ENCODE measurements at regions of chr11 and their contacts with region 1.

Region 1: GRCh38 chr11:80899381-80899780 is 1458.6 kb upstream of the TENM4 start:
- DNase-seq: no peak
- ATAC-seq: peak; percentile 24 to 75 (median 62)
- H3K4me3 ChIP-seq: no peak overlapping the region
- H3K27ac ChIP-seq: no peak overlapping the region
- H3K4me1 ChIP-seq: peaks cover 0 to 5% (median 0%) of the 10 kb centered on the region in 12 donors
- H3K27me3 ChIP-seq: no peaks in the 10 kb centered on the region
- CTCF ChIP-seq: no peak
- POLR2A ChIP-seq: no peak

Region 2: GRCh38 chr11:80925321-80925720 is 25.9 kb after region 1 on chr11:
- intact Hi-C with region 1: loop called in 1 of 10 experiments (anchors 1 kb)
- DNase-seq: no peak
- ATAC-seq: no peak
- H3K4me3 ChIP-seq: no peak overlapping the region
- H3K27ac ChIP-seq: no peak overlapping the region
- H3K4me1 ChIP-seq: no peaks in the 10 kb centered on the region
- H3K27me3 ChIP-seq: no peaks in the 10 kb centered on the region
- CTCF ChIP-seq: no peak
- POLR2A ChIP-seq: no peak